Mammary epithelial cell (primary cell): ENCODE measurements at regions of chr7 and their contacts with region 1.

Region 1: DNA sequence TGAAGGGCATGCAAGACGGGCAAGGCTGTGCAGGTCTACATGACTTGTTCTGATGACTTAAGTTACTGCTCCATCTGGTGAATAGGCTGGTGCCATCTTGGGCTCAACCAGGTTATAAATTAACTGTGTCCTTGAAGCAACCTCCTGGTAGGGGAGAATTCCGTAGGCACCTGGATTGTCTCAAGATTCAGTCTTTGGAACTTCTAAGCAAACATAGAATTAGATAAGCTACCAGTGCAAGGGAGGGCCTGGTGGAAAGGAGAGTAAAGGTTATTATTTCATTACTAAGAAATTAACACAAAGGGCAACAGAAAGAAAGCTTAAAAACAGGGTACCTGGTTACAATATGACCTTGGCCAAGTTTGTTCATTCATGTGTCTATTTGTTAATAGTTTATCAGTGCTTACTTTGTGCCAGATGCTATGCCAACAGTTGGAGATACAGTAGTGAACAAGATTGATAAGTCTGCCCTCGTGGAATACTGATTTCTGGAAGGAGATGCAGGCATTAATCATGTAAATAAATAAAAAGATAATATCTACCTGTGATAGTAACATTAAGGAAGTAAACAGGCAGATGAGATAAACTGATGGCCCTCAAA is 107.0 kb upstream of the PALS2 start:
- DNase-seq: no peak
- H3K4me3 ChIP-seq: no peak overlapping the region
- H3K27ac ChIP-seq: no peak overlapping the region
- H3K4me1 ChIP-seq: no peaks in the 10 kb centered on the region
- H3K27me3 ChIP-seq: no peaks in the 10 kb centered on the region
- CTCF ChIP-seq: no peak

Region 2: GRCh38 chr7:24515906-24516305 is 49.6 kb after region 1 on chr7:
- CTCF ChIA-PET with region 1: no interaction called
- dilution Hi-C with region 1: loop called (anchors 5 kb)
- in situ Hi-C with region 1: no loop called
- intact Hi-C with region 1: no loop called
- DNase-seq: no peak
- H3K4me3 ChIP-seq: no peak overlapping the region
- H3K27ac ChIP-seq: no peak overlapping the region
- H3K4me1 ChIP-seq: no peaks in the 10 kb centered on the region
- H3K27me3 ChIP-seq: no peaks in the 10 kb centered on the region
- CTCF ChIP-seq: no peak